HepG2 (cell line): ENCODE measurements at regions of chr17 and their contacts with region 1.

Region 1: DNA sequence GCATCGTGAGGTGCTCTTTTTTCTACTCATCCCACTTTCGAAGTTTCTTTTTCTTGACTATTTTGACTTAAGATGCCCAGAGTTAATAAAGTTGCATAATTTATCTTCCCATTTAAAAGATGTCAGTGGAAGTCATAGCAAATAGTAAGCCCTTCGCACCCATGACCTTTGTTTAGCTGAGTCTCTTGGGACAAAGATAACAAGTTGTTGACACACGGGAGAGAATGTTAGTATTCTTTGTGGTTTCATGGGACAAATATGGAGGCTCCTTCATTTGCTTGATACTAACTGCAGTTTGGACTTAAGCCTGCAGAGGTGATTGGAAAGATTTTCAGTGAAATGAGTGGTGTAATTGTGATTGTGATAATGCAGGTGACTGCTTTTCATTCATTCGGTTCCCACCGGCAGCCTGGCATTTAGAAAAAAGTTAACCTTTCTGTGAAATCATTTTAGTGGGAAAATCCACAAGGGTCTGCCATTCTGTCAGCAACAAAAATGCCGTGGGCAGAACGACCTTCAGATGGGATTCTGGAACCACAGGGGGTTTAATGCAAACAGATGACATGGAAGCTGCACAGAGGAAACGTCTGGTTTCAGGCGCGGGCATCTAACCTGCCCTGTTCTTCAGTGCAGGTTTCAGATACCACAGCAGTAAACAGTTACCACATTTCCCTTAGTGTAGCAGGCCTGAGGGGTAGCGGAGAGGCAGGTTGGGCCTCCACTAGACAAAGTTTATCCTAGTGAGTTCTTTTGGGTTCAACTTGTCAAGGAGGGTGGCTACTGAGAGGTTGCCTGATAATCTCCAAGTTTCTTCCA is 123.0 kb downstream of the RPTOR start:
- DNase-seq: peak; percentile 91
- ATAC-seq: peak; percentile 60
- H3K4me3 ChIP-seq: peak overlapping the region in 1 of 3 experiments; percentile 3; a peak in 1 of 6 replicates
- H3K27ac ChIP-seq: peak overlapping the region; percentile 65
- H3K4me1 ChIP-seq: peaks cover 100% of the 10 kb centered on the region
- H3K27me3 ChIP-seq: no peaks in the 10 kb centered on the region
- CTCF ChIP-seq: no peak
- EP300 ChIP-seq: peak in 1 of 2 experiments; percentile 88; a peak in 2 of 4 replicates
- POLR2A ChIP-seq: no peak
- RAD21 ChIP-seq: no peak

Region 2: DNA sequence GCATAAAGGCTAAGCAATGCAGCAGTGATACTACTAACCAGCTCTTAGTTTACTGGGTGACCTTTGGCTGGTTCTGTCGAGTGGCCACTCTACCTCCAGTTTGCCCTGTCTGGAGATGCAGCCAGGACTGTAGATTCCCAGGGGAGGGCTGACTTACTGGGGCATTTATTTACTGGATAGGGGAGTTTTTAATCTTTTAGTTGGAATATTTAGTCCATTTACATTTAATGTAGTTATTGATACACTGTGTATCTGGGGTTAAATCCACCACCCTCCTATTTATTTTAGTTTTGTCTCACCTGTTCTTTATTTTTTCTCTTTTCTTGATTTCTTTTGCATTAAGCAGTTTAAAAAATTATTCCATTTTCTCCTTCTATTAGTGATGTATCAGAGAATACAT is 10.1 kb before region 1 on chr17:
- CTCF ChIA-PET with region 1: no interaction called
- POLR2A ChIA-PET with region 1: interaction called, 4 read pairs
- in situ Hi-C with region 1: no loop called
- intact Hi-C with region 1: loop called (anchors 1 kb)
- DNase-seq: no peak
- ATAC-seq: peak; percentile 79
- H3K4me3 ChIP-seq: no peak overlapping the region
- H3K27ac ChIP-seq: peak overlapping the region; percentile 16
- H3K4me1 ChIP-seq: peaks cover 58% of the 10 kb centered on the region
- H3K27me3 ChIP-seq: no peaks in the 10 kb centered on the region
- CTCF ChIP-seq: no peak
- EP300 ChIP-seq: no peak
- POLR2A ChIP-seq: no peak
- RAD21 ChIP-seq: no peak